ENCODE measurements at regions of chr12 and their contacts with region 1.

Region 1: DNA sequence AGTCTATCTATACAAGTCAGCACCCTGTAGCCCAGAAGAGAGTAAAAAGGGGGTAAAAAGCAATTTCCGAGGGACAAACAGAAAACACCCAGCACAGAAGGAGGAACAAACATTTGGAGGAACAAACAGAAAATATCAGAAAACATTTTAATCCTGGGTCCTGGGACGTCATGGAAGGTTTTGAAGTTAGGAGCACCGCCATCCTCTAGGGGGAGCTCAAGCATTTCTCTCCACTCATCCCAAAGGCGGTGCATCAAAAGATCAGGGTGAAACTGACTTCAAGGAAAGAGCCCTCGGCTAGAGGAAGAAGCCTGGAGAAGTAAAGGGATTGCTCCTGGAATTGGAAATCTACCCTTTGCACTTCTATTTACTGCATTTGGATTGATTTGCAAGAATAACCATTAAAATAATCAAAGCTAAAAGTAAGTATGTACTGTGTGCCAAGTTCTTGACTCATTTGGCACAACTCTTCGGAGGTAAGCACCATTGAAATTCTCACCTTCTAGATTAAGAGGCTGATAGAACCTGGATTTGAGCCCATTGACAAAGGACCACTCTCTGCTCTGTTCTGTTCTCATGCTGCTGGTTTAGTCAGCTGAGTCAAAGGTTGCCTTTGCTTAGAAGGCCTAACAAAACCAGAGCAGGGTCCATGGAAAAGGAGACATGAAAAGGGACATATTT is 17.2 kb upstream of the POC1B start:
- DNase-seq: no peak
- ATAC-seq: peak; percentile 75

Region 2: DNA sequence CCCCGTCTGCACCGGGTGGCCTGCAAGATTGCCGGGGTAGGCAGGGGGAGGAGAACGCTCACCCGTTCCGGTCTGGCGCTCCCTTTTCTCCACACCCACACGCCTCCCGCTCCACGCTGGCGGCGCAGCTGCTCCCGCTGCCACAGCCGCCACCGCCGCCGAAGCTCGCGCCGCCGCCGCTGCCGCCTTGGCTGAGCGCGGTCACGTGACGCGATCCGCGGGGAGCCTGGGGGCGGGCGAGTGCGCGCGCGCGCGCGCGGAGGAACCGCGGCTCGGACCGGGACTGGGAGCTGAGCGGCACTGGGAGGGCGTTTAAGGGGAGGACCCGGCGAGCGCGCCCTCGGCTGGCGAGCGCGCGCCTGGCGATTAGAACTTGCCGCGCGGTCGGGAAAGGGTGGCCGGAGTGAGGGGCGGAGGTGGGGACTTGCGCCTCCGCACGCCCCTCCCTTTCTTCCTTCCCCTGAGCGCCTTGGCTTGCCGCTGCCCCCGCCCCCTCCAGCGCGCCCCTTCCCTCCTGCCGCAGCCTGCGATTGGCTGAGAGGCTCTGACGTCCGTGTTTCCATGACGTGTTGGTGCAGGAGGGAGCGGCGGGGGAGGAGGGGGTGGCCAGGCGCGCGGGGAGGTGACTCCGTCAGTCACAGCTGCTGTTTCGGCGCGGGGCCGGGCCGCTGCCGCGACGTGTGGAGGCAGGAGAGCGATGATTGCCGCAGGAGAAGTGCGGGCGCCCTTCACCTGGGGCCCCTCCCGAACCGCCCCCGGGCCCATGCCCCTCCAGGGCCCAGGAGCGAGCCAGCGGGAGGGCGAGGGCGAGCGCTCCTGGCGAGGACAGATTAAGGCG is 166.3 kb after region 1 on chr12:
- intact Hi-C with region 1: loop called (anchors 10 kb)
- DNase-seq: peak; percentile 99
- ATAC-seq: peak; percentile 96

Region 3: GRCh38 chr12:90102957-90103652 is 560.1 kb after region 1 on chr12:
- intact Hi-C with region 1: loop called (anchors 5 kb)
- DNase-seq: no peak
- ATAC-seq: no peak

Region 4: DNA sequence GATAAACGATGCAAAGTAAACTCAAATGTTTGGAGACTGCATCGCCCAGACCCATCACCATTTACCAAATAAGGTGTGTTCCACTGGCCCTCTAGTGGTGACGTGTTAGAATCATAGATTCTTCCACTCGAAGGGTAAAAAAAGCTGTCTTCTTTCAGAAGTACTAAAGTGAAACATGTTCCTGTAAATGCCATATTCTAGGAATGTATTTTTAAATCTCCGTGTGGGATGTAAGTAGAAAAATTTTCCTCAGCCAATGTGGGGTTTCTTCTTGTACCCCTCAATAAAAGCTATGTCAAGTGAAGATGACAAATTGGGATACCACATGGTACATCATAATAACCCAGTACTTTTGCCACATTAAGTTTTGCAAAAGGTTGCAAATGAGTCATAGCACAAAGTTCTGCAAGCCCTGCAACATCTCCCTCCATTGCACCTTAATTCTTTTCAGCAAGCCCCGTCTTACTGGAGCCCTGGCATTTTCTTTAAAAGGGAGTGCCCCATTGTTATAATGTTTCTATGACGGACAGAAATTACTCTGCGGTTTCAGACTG is 1311.2 kb after region 1 on chr12:
- intact Hi-C with region 1: loop called (anchors 5 kb)
- DNase-seq: no peak
- ATAC-seq: no peak

Measured in Right ventricle myocardium inferior (tissue), 1 donor.